Activated CD4-positive, alpha-beta T cell treated with anti-CD3 and anti-CD28 coated beads for 36 hours (primary cell): ENCODE measurements at regions of chr1 and their contacts with region 1.

Region 1: DNA sequence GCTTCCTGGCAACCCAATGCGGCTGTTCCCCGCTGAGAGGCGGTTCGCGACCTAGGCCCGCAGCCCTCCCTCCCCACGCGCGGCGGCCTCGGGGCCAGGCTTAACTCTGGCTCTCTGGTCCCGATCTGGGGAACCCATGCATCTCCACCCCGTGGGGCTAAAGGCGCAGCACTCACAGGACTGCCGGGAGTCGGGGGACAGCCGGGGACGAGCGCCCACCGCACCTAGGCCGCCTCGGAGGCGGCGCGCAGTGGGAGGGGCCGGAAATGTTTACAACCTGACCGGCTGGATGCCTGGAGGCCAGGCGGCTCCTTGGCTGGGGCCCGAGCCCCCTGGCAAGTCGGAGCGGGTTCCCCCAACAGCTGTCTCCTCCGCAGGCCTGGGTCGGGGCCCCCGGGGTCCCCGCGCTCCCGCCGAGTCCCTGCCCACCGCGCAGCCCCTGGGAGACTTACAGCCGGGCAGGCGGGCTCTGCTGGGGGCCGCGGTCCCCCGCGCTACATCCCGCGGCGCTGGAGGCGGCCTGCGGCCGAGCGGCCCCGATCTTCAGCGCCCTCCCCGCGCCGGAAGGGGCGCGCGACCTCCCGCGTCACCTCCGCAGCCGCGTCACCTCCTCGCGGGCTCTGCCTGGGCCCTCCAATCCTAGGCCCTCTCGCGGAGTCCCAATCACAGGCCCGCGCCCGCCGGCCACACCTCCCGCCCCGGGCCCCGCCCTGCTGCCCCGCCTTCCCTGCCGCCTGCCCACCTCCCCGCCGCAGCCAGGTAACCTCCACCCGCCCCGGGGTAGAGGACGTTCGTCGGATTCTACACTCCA is at the start of gene ADIPOR1:
- DNase-seq: peak; percentile 96
- ATAC-seq: peak; percentile 100
- H3K4me3 Mint-ChIP-seq: peak within 1 kb of the TSS; percentile 83
- H3K27ac Mint-ChIP-seq: peak within 1 kb of the TSS; percentile 82
- H3K4me1 Mint-ChIP-seq: peaks cover 46% of the 10 kb centered on the region
- H3K27me3 Mint-ChIP-seq: no peaks in the 10 kb centered on the region
- total RNA-seq, gene ADIPOR1: 65.4 to 85.1 TPM

Region 2: DNA sequence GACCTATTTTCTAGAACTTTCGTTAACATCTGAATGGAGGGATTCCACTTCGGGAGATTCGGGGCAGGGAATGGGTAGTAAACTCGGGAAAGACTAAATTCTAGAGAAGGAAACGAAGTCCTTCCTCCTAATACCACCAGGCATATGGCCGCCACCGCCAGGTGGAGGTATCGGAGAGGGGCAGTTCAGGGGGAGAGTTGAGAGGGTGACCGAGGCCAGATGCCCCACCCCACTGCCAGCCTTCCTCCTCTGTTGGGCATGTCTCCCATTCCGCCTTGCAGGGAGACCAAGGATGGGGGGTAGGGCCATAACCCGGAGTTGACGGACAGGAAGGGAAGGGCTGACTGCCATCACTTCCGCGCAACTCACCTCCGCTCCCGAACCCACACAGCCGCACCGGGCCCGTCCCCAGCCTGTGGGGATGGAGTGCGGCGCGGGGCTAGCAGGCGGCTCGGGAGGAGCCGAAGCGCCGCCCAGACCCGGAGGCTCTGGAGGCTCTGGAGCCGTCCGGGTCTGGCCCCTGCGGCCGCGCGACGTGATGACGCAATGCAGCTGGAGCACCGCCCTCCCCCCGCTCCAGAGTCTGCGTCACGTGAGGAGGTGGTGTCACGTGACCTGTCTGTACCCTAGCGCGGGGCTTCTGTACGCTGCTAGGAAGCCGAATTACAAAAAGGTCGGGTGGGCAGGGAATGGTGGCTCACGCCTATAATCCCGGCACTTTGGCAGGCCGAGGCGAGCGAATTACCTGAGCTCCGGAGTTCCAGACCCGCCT is 31.0 kb before region 1 on chr1 and contains the start of gene KLHL12:
- CTCF ChIA-PET with region 1: interaction called, 4 read pairs
- POLR2A ChIA-PET with region 1: interaction called, 4 read pairs
- intact Hi-C with region 1: loop called (anchors 1 kb)
- DNase-seq: peak; percentile 98
- ATAC-seq: peak; percentile 96
- H3K4me3 Mint-ChIP-seq: peak within 1 kb of the TSS; percentile 86
- H3K27ac Mint-ChIP-seq: peak within 1 kb of the TSS; percentile 85
- H3K4me1 Mint-ChIP-seq: peaks cover 24% of the 10 kb centered on the region
- H3K27me3 Mint-ChIP-seq: no peaks in the 10 kb centered on the region
- total RNA-seq, gene KLHL12: 32.1 to 39.1 TPM

Region 3: GRCh38 chr1:202941372-202941771 is 16.6 kb before region 1 on chr1:
- CTCF ChIA-PET with region 1: interaction called, 5 read pairs
- POLR2A ChIA-PET with region 1: interaction called, 9 read pairs
- intact Hi-C with region 1: loop called in 1 of 2 experiments (anchors 1 kb)
- DNase-seq: no peak
- ATAC-seq: no peak
- H3K4me3 Mint-ChIP-seq: no peak overlapping the region
- H3K27ac Mint-ChIP-seq: no peak overlapping the region
- H3K4me1 Mint-ChIP-seq: no peaks in the 10 kb centered on the region
- H3K27me3 Mint-ChIP-seq: no peaks in the 10 kb centered on the region